MCF 10A (cell line): ENCODE measurements at regions of chr4 and their contacts with region 1.

Region 1: GRCh38 chr4:68498413-68499007 is 51.2 kb downstream of the TMPRSS11E start:
- DNase-seq: peak; percentile 79
- H3K4me3 Mint-ChIP-seq: no peak overlapping the region
- H3K27ac Mint-ChIP-seq: no peak overlapping the region
- H3K4me1 Mint-ChIP-seq: no peaks in the 10 kb centered on the region
- H3K27me3 Mint-ChIP-seq: no peaks in the 10 kb centered on the region
- CTCF ChIP-seq: peak; percentile 88

Region 2: GRCh38 chr4:67131224-67131623 is 1367.3 kb before region 1 on chr4:
- CTCF ChIA-PET with region 1: no interaction called
- POLR2A ChIA-PET with region 1: no interaction called
- intact Hi-C with region 1: no loop called
- DNase-seq: no peak
- H3K4me3 Mint-ChIP-seq: no peak overlapping the region
- H3K27ac Mint-ChIP-seq: no peak overlapping the region
- H3K4me1 Mint-ChIP-seq: no peaks in the 10 kb centered on the region
- H3K27me3 Mint-ChIP-seq: no peaks in the 10 kb centered on the region
- CTCF ChIP-seq: no peak

Region 3: DNA sequence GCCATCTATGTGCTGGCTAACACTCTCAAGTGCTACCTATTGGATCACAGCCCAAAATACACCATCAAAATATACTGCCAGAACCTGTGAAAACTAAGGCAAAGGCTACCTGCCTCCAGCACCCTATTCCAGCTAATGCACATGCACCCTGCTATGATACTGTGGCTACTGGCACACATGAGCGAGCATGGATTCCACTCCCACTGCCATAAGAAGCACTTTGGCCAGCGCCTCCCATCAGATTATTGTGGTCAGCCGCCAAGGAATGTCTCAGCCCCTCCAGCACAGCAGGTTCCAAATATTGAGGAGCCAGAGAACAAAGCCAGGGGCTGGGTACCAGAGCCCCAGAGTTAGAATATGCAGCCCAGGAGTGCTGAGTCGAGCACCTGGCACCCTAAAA is 336.3 kb before region 1 on chr4:
- CTCF ChIA-PET with region 1: no interaction called
- POLR2A ChIA-PET with region 1: no interaction called
- intact Hi-C with region 1: no loop called
- DNase-seq: no peak
- H3K4me3 Mint-ChIP-seq: no peak overlapping the region
- H3K27ac Mint-ChIP-seq: no peak overlapping the region
- H3K4me1 Mint-ChIP-seq: no peaks in the 10 kb centered on the region
- H3K27me3 Mint-ChIP-seq: no peaks in the 10 kb centered on the region
- CTCF ChIP-seq: no peak

Region 4: GRCh38 chr4:68987007-68987406 is 488.5 kb after region 1 on chr4:
- CTCF ChIA-PET with region 1: no interaction called
- POLR2A ChIA-PET with region 1: no interaction called
- intact Hi-C with region 1: no loop called
- DNase-seq: no peak
- H3K4me3 Mint-ChIP-seq: no peak overlapping the region
- H3K27ac Mint-ChIP-seq: no peak overlapping the region
- H3K4me1 Mint-ChIP-seq: no peaks in the 10 kb centered on the region
- H3K27me3 Mint-ChIP-seq: no peaks in the 10 kb centered on the region
- CTCF ChIP-seq: no peak

Region 5: GRCh38 chr4:69167300-69167699 is 668.8 kb after region 1 on chr4:
- CTCF ChIA-PET with region 1: interaction called, 14 read pairs
- POLR2A ChIA-PET with region 1: no interaction called
- intact Hi-C with region 1: loop called (anchors 1 kb)
- DNase-seq: no peak
- H3K4me3 Mint-ChIP-seq: no peak overlapping the region
- H3K27ac Mint-ChIP-seq: no peak overlapping the region
- H3K4me1 Mint-ChIP-seq: no peaks in the 10 kb centered on the region
- H3K27me3 Mint-ChIP-seq: no peaks in the 10 kb centered on the region
- CTCF ChIP-seq: no peak

Region 6: GRCh38 chr4:69617083-69617694 is 1118.7 kb after region 1 on chr4:
- CTCF ChIA-PET with region 1: interaction called, 8 read pairs
- POLR2A ChIA-PET with region 1: no interaction called
- intact Hi-C with region 1: loop called (anchors 1 kb)
- DNase-seq: peak; percentile 66
- H3K4me3 Mint-ChIP-seq: no peak overlapping the region
- H3K27ac Mint-ChIP-seq: no peak overlapping the region
- H3K4me1 Mint-ChIP-seq: no peaks in the 10 kb centered on the region
- H3K27me3 Mint-ChIP-seq: peaks cover 43% of the 10 kb centered on the region
- CTCF ChIP-seq: peak; percentile 62